ENCODE measurements at regions of chr4 and their contacts with region 1.

Region 1: DNA sequence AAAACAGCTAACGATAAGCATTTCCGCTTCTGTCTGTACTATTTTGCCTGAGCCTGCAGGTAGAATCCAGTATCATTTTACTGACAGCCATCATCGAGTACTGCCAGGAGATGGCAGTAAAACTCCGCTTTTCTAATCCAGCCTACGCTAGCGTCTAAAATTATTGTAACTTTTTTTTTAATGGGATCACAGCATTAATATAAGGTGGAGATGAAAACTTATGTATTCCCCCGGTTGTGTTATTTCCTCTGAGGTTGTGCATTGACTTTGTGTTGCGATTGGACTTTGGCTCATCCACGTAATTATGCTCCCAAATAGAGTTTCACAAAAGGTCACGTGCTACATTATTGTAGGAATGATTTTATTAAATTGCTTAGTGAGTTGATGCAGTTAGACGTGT is 248.1 kb downstream of the C4orf33 start:
- DNase-seq: peak in 1 of 2 experiments; percentile 57
- H3K4me3 ChIP-seq: no peak overlapping the region
- H3K27ac ChIP-seq: no peak overlapping the region
- H3K4me1 ChIP-seq: 0 out of 2 replicates have a peak, but pooled peaks cover 13% of the 10 kb centered on the region
- H3K27me3 ChIP-seq: no peaks in the 10 kb centered on the region
- CTCF ChIP-seq: peak; percentile 62

Region 2: DNA sequence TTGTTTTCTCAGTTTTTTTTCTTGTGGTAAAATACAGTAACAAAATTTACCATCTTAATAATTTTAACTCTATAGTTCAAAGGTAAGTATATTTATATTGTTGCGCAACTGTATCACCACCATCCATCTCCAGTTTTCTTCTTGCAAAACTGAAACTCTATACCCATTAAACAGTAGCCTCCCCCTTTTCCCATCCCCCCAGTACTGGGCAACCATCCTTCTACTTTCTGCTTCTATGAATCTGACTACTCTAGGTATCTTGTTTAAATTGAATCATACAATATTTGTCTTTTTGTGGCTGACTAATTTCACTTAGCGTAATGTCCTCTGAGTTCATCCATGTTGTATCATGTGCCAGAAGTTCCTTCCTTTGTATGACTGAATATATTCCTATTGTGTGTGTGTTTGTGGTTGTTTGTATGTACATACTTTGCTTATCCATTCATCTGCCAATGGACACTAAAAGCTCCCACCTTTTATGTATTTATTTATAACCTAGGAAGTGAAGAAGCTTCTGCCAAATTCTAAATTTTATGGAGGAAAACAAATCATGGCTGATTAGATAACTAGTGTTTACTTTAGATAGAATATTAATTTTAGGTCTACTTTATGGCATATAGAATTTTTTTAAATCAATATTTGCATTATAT is 1368.8 kb before region 1 on chr4:
- CTCF ChIA-PET with region 1: interaction called, 13 read pairs
- POLR2A ChIA-PET with region 1: no interaction called
- intact Hi-C with region 1: no loop called
- DNase-seq: no peak
- H3K4me3 ChIP-seq: no peak overlapping the region
- H3K27ac ChIP-seq: no peak overlapping the region
- H3K4me1 ChIP-seq: no peaks in the 10 kb centered on the region
- H3K27me3 ChIP-seq: no peaks in the 10 kb centered on the region
- CTCF ChIP-seq: no peak

Region 3: DNA sequence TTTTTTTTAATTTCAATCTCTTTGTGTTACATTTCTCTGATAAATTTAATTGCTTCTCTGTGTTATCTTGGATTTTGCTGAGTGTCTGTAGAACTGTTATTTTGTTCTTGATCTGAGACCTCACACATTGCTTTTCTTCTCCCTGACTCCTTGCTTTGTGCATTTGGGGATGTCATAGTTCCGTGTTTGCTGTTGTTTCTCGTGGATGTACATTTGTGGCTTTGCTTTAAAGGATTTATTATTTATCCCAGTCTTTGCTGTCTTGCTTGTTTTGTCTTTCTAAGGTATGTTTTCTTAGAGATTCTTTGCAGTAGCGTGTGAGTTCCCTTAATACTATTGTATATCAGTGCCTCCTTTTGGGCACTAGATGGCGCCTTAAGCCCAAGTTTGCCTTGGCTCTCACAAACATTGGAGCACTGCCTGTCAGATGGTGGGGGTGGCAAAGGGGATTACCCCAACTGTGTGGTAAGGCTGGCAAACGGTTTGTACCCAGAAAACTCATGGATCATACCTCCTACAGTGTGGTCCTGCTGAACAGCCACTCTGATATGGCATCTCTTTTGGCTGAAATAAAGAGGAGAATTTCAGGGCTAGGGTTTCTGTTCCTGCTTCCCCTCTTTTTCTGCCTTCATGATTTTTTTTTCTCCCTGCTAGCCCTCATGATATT is 1152.8 kb before region 1 on chr4:
- CTCF ChIA-PET with region 1: no interaction called
- POLR2A ChIA-PET with region 1: no interaction called
- intact Hi-C with region 1: loop called (anchors 5 kb)
- DNase-seq: peak; percentile 45 to 55
- H3K4me3 ChIP-seq: no peak overlapping the region
- H3K27ac ChIP-seq: no peak overlapping the region
- H3K4me1 ChIP-seq: no peaks in the 10 kb centered on the region
- H3K27me3 ChIP-seq: no peaks in the 10 kb centered on the region
- CTCF ChIP-seq: peak; percentile 89

Region 4: DNA sequence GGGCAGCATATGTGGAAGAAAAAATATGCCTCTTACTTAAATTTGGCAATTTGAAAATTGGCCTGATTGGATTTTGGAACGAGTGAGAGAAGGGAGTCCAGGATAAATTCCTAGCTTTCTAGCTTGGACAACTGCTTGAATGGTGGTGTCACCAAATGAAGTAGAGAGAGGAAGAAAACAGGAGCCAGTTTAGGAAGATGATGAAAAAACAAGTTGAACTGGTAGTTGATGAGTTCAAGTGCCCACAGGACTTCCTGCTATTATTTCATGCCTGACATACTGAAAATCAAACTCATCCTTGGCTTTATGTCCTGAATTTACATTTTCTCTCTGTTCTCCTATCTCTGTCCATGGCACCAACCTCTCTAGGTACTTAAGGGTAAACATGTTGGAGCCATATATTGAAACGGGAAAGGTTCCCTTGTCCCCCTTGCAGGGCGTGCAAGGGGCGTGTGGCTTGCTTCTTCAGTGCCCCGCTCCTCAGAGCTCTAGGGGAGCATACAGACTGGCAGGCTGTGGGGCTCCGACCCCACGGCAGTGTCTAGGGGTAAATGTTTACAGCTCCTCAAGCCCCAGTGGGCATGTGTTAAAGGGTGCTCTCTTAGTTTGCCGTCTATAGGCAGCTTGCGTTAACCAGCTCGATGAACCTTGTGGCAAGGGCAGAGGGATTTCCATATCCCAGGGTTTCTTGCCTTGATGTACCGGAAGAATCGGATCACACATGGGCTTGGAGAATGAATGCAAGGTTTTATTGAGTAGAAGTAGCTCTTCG is 805.8 kb before region 1 on chr4:
- CTCF ChIA-PET with region 1: no interaction called
- POLR2A ChIA-PET with region 1: no interaction called
- intact Hi-C with region 1: no loop called
- DNase-seq: peak in 1 of 2 experiments; percentile 56
- H3K4me3 ChIP-seq: no peak overlapping the region
- H3K27ac ChIP-seq: no peak overlapping the region
- H3K4me1 ChIP-seq: peaks cover 9% of the 10 kb centered on the region; the same call in 1 of the 2 replicates
- H3K27me3 ChIP-seq: no peaks in the 10 kb centered on the region
- CTCF ChIP-seq: no peak

Region 5: GRCh38 chr4:129093191-129093920 is 250.7 kb before region 1 on chr4 and contains the start of gene SCLT1:
- CTCF ChIA-PET with region 1: no interaction called
- POLR2A ChIA-PET with region 1: interaction called, 6 read pairs
- intact Hi-C with region 1: loop called (anchors 5 kb)
- DNase-seq: peak; percentile 90 to 97
- H3K4me3 ChIP-seq: peak within 1 kb of the TSS; percentile 77
- H3K27ac ChIP-seq: peak within 1 kb of the TSS; percentile 72
- H3K4me1 ChIP-seq: peaks cover 18% of the 10 kb centered on the region
- H3K27me3 ChIP-seq: no peaks in the 10 kb centered on the region
- CTCF ChIP-seq: no peak
- total RNA-seq, gene SCLT1: 15.9 and 16.9 TPM in 2 replicates

Region 6: GRCh38 chr4:129328162-129328561 is 15.9 kb before region 1 on chr4:
- CTCF ChIA-PET with region 1: no interaction called
- POLR2A ChIA-PET with region 1: interaction called, 20 read pairs
- intact Hi-C with region 1: no loop called
- DNase-seq: peak in 1 of 2 experiments; percentile 75
- H3K4me3 ChIP-seq: no peak overlapping the region
- H3K27ac ChIP-seq: peak overlapping the region; percentile 34; the same call in 1 of the 2 replicates
- H3K4me1 ChIP-seq: 0 out of 2 replicates have a peak, but pooled peaks cover 4% of the 10 kb centered on the region
- H3K27me3 ChIP-seq: no peaks in the 10 kb centered on the region
- CTCF ChIP-seq: no peak

Region 7: DNA sequence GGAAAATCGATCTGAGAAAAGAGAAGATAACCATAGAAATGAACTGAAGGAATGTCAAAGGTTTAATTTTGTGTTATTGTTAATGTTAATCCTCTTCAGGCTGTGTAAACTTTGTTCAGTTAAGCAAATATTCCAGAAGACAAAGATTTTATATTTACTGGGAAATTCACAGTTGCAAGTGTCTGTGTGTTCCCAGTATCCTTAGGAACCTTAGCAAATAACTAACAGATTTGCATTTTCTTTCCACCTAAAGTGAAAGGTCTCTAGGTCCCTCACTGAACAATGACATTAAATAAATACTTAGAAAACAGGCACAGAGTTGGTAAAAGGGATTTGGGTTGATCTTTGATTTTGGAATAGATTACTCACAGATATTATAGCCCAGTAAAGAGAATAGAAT is 76.6 kb after region 1 on chr4:
- CTCF ChIA-PET with region 1: no interaction called
- POLR2A ChIA-PET with region 1: no interaction called
- intact Hi-C with region 1: no loop called
- DNase-seq: no peak
- H3K4me3 ChIP-seq: no peak overlapping the region
- H3K27ac ChIP-seq: no peak overlapping the region
- H3K4me1 ChIP-seq: no peaks in the 10 kb centered on the region
- H3K27me3 ChIP-seq: no peaks in the 10 kb centered on the region
- CTCF ChIP-seq: no peak

Region 8: GRCh38 chr4:129641179-129641578 is 297.1 kb after region 1 on chr4:
- CTCF ChIA-PET with region 1: no interaction called
- POLR2A ChIA-PET with region 1: no interaction called
- intact Hi-C with region 1: loop called (anchors 1 kb)
- DNase-seq: peak in 1 of 2 experiments; percentile 29
- H3K4me3 ChIP-seq: no peak overlapping the region
- H3K27ac ChIP-seq: no peak overlapping the region
- H3K4me1 ChIP-seq: no peaks in the 10 kb centered on the region
- H3K27me3 ChIP-seq: no peaks in the 10 kb centered on the region
- CTCF ChIP-seq: peak; percentile 77

Region 9: GRCh38 chr4:130110189-130110588 is 766.1 kb after region 1 on chr4:
- CTCF ChIA-PET with region 1: no interaction called
- POLR2A ChIA-PET with region 1: no interaction called
- intact Hi-C with region 1: no loop called
- DNase-seq: no peak
- H3K4me3 ChIP-seq: no peak overlapping the region
- H3K27ac ChIP-seq: no peak overlapping the region
- H3K4me1 ChIP-seq: no peaks in the 10 kb centered on the region
- H3K27me3 ChIP-seq: no peaks in the 10 kb centered on the region
- CTCF ChIP-seq: no peak

Measured in PC-9 (cell line).